Colonic mucosa (tissue), 4 donors: ENCODE measurements at regions of chr14 and their contacts with region 1.

Region 1: GRCh38 chr14:21734457-21735074 is 60.9 kb upstream of the OR4E1 start:
- DNase-seq: peak; percentile 34
- H3K4me3 ChIP-seq: no peak overlapping the region
- H3K27ac ChIP-seq: no peak overlapping the region
- H3K4me1 ChIP-seq: peaks cover 3% of the 10 kb centered on the region
- H3K27me3 ChIP-seq: no peaks in the 10 kb centered on the region
- CTCF ChIP-seq: peak; percentile 53

Region 2: GRCh38 chr14:21643407-21643806 is 91.2 kb before region 1 on chr14:
- intact Hi-C with region 1: loop called (anchors 5 kb)
- DNase-seq: no peak
- H3K4me3 ChIP-seq: no peak overlapping the region
- H3K27ac ChIP-seq: no peak overlapping the region
- H3K4me1 ChIP-seq: no peaks in the 10 kb centered on the region
- H3K27me3 ChIP-seq: no peaks in the 10 kb centered on the region
- CTCF ChIP-seq: no peak

Region 3: DNA sequence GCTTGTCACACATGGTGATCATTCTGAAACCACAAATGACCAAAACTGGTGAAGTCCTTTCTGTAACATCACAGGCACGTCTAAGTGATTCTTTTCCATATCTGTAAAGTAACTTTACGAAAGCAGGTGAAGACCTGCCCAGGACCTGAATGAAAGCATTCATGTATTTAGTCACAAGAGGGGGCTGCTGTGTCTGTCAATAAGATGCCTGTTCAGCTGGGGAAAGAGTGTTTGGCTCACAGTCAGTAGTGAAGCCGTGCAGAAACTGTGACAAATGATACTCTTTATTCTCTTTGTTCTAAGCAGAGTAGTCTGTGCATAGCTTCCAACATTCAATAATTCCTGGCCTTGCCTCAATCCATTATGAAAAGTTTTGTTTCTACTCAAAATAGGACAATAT is 312.5 kb after region 1 on chr14:
- intact Hi-C with region 1: no loop called
- DNase-seq: no peak
- H3K4me3 ChIP-seq: no peak overlapping the region
- H3K27ac ChIP-seq: no peak overlapping the region
- H3K4me1 ChIP-seq: no peaks in the 10 kb centered on the region
- H3K27me3 ChIP-seq: no peaks in the 10 kb centered on the region
- CTCF ChIP-seq: no peak